Activated naive CD4-positive, alpha-beta T cell treated with anti-CD3 and anti-CD28 coated beads for 36 hours (primary cell): ENCODE measurements at regions of chr6 and their contacts with region 1.

Region 1: DNA sequence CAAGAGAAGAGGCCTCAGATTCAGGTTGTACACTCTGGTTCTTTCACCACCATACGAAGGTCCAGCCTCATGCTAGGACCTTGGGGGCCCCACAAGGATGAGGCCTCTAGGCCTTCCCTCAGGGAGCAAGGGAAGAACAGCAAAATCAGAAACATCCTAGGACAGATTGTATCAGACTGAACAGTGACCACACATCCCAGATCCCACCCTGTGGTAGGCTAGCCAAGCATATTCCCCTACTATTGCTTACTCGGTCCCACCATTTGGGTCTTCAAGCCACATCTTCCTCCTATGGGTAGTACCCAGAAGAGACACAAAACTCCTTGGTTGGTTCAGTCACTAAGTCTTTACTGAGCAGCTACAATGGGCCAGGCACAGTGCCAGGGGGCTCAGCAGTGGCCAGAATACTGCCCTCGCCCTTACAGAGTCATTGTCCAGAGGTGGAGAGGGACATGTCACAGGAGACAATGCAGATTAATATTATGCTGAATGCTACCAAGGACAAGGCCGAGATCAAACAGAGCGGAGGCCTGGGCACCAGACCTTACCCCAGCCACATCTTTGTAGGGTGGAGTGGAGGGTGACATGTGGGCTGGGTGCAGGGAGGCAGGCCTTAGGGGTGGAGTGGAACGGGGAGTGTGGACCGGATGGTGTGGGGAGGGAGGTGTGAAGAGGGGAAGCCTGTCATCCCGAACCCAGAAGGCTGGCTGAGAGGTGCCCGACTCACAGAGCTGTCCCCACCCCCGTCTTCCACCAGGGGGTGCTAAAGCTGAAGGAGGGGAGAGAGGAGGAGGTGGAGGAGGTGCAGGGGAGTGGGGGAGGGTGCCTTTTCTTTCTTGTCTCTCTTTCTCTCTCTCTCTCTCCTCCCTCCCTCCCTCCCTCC is 6.8 kb upstream of the MAPK13 start:
- DNase-seq: peak; percentile 97
- H3K4me3 Mint-ChIP-seq: no peak overlapping the region
- H3K27ac Mint-ChIP-seq: peak overlapping the region; percentile 67
- H3K4me1 Mint-ChIP-seq: peaks cover 77% of the 10 kb centered on the region
- H3K27me3 Mint-ChIP-seq: no peaks in the 10 kb centered on the region

Region 2: DNA sequence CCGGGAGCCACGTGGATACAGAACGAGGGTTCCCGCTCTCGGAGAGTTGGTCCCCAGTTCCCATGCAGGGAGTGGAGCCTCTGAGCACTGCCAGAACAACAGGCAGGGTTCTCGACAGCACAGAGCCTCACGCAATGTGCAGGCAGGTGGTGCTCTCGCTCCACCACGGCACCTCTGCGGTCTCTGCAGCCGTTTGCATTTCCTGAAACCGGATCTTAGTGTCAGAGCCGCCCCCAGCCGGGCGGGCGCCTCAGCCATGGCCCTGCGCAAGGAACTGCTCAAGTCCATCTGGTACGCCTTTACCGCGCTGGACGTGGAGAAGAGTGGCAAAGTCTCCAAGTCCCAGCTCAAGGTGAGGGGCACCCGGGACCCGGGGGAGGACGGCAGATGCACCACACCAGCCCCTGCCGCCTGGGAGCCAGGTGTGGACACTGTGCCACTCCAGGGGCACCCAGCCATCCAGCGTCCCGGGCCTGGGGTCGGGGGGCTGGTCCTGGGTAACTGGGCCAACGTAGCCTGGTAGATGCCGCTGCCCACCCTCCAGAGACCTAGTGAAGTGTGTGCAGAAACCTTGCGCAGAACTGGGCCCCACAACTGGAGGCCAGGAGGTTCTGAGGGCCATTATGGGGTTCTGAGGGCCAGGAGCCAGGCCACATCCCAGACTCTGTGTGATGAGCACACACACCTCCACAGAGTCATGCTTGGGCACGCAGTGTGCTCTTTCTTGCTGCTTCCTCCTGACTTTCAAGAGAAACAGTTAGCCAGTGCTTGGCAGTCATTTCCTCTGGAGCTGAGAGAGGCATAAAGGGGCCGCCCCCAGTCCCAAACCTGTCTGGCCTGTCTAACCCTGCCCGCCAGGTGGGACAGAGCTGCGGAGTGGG is 825.7 kb before region 1 on chr6 and contains the start of gene DEF6:
- CTCF ChIA-PET with region 1: no interaction called
- intact Hi-C with region 1: loop called (anchors 2 kb)
- DNase-seq: peak; percentile 95
- H3K4me3 Mint-ChIP-seq: peak within 1 kb of the TSS; percentile 81
- H3K27ac Mint-ChIP-seq: peak within 1 kb of the TSS; percentile 94
- H3K4me1 Mint-ChIP-seq: peaks cover 41% of the 10 kb centered on the region
- H3K27me3 Mint-ChIP-seq: no peaks in the 10 kb centered on the region
- total RNA-seq, gene DEF6: 89.9 to 90.6 TPM

Region 3: DNA sequence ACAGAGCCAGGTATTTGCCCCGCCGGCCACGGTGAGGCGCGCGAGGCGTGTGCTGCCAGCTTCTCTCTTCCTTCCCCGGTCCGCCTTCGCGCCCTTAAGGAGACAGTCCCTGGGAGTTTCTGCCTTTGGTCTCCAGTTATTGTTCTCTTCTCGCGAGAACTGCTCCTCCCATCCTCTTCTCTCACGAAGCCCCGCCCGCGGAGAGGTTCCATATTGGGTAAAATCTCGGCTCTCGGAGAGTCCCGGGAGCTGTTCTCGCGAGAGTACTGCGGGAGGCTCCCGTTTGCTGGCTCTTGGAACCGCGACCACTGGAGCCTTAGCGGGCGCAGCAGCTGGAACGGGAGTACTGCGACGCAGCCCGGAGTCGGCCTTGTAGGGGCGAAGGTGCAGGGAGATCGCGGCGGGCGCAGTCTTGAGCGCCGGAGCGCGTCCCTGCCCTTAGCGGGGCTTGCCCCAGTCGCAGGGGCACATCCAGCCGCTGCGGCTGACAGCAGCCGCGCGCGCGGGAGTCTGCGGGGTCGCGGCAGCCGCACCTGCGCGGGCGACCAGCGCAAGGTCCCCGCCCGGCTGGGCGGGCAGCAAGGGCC is 95.9 kb before region 1 on chr6 and contains the start of gene MAPK14:
- CTCF ChIA-PET with region 1: interaction called, 8 read pairs
- intact Hi-C with region 1: loop called (anchors 1 kb)
- DNase-seq: peak; percentile 100
- H3K4me3 Mint-ChIP-seq: peak within 1 kb of the TSS; percentile 93
- H3K27ac Mint-ChIP-seq: peak within 1 kb of the TSS; percentile 93
- H3K4me1 Mint-ChIP-seq: peaks cover 33% of the 10 kb centered on the region
- H3K27me3 Mint-ChIP-seq: peaks cover 19% of the 10 kb centered on the region
- total RNA-seq, gene MAPK14: 39.9 to 40.3 TPM

Region 4: DNA sequence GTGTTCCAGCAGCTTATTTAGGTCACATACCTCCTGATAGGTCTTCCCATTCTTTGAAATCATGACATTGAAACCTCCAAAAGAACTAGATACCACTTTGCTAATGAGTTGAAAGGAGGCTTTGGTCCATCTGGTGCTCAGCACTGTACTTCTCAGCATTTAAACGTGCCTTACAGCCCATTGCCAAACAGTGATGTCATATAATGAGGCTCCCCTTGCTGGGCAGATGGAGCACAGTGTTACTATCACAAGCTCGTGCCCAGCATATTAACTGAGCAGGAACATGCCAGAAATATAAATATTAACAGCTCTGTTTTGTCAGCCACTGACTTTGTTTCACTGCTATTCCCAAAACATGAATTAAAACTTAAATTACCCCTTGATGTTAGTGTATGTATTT is 18.7 kb before region 1 on chr6:
- CTCF ChIA-PET with region 1: interaction called, 5 read pairs
- intact Hi-C with region 1: loop called (anchors 1 kb)
- DNase-seq: no peak
- H3K4me3 Mint-ChIP-seq: no peak overlapping the region
- H3K27ac Mint-ChIP-seq: no peak overlapping the region
- H3K4me1 Mint-ChIP-seq: peaks cover 40% of the 10 kb centered on the region
- H3K27me3 Mint-ChIP-seq: no peaks in the 10 kb centered on the region

Region 5: GRCh38 chr6:36302227-36302976 is 178.9 kb after region 1 on chr6:
- CTCF ChIA-PET with region 1: interaction called, 4 read pairs
- intact Hi-C with region 1: loop called (anchors 2 kb)
- DNase-seq: peak; percentile 98
- H3K4me3 Mint-ChIP-seq: no peak overlapping the region
- H3K27ac Mint-ChIP-seq: no peak overlapping the region
- H3K4me1 Mint-ChIP-seq: peaks cover 2% of the 10 kb centered on the region
- H3K27me3 Mint-ChIP-seq: no peaks in the 10 kb centered on the region

Region 6: GRCh38 chr6:36360241-36361054 is 236.9 kb after region 1 on chr6:
- CTCF ChIA-PET with region 1: interaction called, 4 read pairs
- intact Hi-C with region 1: loop called (anchors 1 kb)
- DNase-seq: peak; percentile 83
- H3K4me3 Mint-ChIP-seq: no peak overlapping the region
- H3K27ac Mint-ChIP-seq: no peak overlapping the region
- H3K4me1 Mint-ChIP-seq: peaks cover 9% of the 10 kb centered on the region
- H3K27me3 Mint-ChIP-seq: no peaks in the 10 kb centered on the region

Region 7: DNA sequence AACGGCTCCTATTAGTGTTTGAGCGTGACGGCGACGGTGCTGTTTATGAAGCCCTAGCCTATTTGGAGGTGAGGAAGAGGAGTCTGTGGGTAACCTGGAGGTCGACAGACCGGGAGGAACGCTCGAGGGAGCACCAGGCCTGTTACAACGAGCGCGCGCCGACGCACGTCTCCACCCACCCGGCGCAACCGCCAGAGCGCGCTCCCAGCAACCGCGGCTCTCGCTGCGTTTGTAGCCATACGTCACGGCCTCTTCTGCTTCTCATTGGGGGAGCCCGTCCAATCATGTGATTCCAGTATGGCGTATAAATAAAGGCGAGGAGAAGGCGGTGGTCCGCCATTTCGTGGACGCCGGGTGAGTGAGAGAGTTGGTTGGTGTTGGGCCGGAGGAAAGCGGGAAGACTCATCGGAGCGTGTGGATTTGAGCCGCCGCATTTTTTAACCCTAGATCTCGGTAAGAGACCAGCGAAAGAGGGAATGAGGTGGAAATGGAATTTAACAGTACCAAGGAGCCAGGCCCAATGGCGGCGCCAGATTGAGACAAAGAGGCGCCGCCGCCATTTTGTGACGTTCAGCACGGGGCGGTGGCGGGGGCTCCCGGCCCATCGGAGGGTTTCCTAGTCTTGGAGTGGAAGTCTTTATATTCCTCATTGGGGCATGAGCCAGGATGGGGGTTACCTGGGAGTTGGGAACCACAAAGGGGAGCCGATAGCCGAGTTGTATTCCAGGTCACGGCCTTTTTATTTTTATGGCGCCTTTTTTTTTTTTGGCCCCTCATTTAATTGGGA is 470.7 kb after region 1 on chr6 and contains the start of gene SRSF3:
- CTCF ChIA-PET with region 1: no interaction called
- intact Hi-C with region 1: loop called (anchors 10 kb)
- DNase-seq: peak; percentile 98
- H3K4me3 Mint-ChIP-seq: peak within 1 kb of the TSS; percentile 92
- H3K27ac Mint-ChIP-seq: peak within 1 kb of the TSS; percentile 98
- H3K4me1 Mint-ChIP-seq: peaks cover 31% of the 10 kb centered on the region
- H3K27me3 Mint-ChIP-seq: no peaks in the 10 kb centered on the region
- total RNA-seq, gene SRSF3: 250 to 269 TPM